HEK293 (cell line): ENCODE measurements at regions of chr3 and their contacts with region 1.

Region 1: DNA sequence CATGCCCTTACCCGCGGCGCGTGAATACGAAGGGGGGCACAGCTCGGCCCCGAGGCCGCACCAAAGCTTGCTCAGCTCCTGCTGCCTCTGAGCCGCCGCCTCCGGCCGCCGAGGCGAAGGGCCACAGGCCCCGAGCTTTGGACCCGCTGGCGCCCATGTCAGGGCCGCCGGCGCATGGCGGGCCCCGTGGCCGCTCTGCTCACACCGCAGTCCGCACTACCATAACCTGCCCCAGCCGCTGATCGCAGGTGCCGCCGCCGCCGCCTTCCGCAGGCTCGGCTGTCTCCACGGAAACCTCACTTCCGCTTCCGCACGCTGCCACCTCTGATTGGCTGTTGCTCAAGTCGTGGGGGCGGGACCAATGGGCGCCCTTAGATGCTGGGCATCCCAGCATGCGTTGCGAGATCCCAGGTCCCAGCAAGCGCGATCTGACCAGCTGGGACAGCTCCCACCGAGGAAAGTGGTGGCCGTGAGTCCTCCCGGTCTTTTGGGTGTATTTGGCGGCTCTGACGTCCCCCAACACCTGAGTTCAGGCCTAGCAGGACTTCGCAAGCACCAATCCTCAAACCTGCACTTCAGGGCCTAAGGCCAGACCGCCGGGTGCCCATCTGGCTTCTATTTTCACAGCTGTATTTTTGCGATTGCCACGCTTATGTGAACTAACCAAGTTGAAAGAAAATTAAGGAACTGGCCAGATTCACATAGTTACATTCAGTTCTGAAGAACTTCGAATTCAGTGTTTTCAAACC is at the start of gene TUSC2:
- H3K4me3 ChIP-seq: peak within 1 kb of the TSS; percentile 92
- H3K27ac ChIP-seq: peak within 1 kb of the TSS; percentile 71
- H3K4me1 ChIP-seq: no peaks in the 10 kb centered on the region
- CTCF ChIP-seq: no peak

Region 2: GRCh38 chr3:50260027-50260941 is 67.8 kb before region 1 on chr3:
- CTCF ChIA-PET with region 1: interaction called, 5 read pairs
- POLR2A ChIA-PET with region 1: interaction called, 11 read pairs
- H3K4me3 ChIP-seq: peak overlapping the region; percentile 36
- H3K27ac ChIP-seq: peak overlapping the region; percentile 86
- H3K4me1 ChIP-seq: peaks cover 3% of the 10 kb centered on the region; the same call in 1 of the 2 replicates
- CTCF ChIP-seq: peak; percentile 75; the same call in 1 of the 2 replicates

Region 3: GRCh38 chr3:50292159-50293078 is 35.7 kb before region 1 on chr3 and contains the start of gene IFRD2:
- CTCF ChIA-PET with region 1: interaction called, 4 read pairs
- POLR2A ChIA-PET with region 1: interaction called, 13 read pairs
- H3K4me3 ChIP-seq: peak within 1 kb of the TSS; percentile 80
- H3K27ac ChIP-seq: peak within 1 kb of the TSS; percentile 77
- H3K4me1 ChIP-seq: no peaks in the 10 kb centered on the region
- CTCF ChIP-seq: no peak

Region 4: DNA sequence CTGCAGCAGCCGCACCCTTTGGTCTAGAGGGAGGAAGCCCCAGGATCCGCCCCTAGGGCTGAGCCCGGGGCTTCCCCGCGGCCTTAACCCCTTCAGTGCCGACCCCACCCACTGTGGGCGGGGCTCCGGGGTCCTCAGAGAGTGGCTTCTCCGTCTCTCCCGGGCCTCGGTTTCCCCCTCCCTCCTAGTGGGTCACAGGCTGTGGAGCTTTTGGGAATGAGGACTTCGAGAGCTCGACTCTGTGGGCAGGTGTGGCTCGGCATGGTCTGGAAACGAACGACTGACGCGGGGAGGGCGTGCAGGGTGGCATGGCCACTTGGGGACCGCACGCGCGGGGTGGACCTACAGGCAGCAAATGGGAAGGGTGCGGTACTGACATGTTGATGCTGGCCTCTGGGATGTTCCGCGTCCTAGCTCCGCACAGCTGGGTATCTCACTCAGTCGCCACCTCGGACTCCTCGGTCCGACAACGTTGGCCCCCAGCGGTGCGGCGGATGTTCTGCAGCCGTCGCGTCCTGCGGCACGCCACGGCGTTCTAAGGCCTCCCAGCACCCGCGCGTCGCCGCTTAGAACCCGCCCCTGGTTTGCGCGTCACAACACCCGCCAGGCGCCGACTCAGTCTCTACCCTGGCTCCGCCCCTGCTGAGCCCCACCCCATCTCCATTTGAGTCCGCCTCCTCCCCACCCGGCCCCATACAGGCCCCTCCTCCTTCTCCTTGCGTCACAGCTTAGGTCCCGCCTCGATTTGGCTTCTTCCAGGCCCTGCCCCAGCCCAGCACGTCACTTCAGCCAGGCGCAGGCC is 29.1 kb before region 1 on chr3 and contains the starts of genes HYAL3 and NAA80:
- CTCF ChIA-PET with region 1: interaction called, 7 read pairs
- POLR2A ChIA-PET with region 1: interaction called, 17 read pairs
- H3K4me3 ChIP-seq: peak within 1 kb of the TSS; percentile 69
- H3K27ac ChIP-seq: peak within 1 kb of the TSS; percentile 56
- H3K4me1 ChIP-seq: no peaks in the 10 kb centered on the region
- CTCF ChIP-seq: peak; percentile 85; the same call in 1 of the 2 replicates

Region 5: GRCh38 chr3:50567386-50568167 is 239.5 kb after region 1 on chr3 and contains the start of gene C3orf18:
- CTCF ChIA-PET with region 1: no interaction called
- POLR2A ChIA-PET with region 1: no interaction called
- H3K4me3 ChIP-seq: no peak within 1 kb of the TSS
- H3K27ac ChIP-seq: no peak within 1 kb of the TSS
- H3K4me1 ChIP-seq: no peaks in the 10 kb centered on the region; the same call in 1 of the 2 replicates
- CTCF ChIP-seq: no peak